Sciatic nerve (tissue), 2 donors: ENCODE measurements at regions of chr7 and their contacts with region 1.

Region 1: DNA sequence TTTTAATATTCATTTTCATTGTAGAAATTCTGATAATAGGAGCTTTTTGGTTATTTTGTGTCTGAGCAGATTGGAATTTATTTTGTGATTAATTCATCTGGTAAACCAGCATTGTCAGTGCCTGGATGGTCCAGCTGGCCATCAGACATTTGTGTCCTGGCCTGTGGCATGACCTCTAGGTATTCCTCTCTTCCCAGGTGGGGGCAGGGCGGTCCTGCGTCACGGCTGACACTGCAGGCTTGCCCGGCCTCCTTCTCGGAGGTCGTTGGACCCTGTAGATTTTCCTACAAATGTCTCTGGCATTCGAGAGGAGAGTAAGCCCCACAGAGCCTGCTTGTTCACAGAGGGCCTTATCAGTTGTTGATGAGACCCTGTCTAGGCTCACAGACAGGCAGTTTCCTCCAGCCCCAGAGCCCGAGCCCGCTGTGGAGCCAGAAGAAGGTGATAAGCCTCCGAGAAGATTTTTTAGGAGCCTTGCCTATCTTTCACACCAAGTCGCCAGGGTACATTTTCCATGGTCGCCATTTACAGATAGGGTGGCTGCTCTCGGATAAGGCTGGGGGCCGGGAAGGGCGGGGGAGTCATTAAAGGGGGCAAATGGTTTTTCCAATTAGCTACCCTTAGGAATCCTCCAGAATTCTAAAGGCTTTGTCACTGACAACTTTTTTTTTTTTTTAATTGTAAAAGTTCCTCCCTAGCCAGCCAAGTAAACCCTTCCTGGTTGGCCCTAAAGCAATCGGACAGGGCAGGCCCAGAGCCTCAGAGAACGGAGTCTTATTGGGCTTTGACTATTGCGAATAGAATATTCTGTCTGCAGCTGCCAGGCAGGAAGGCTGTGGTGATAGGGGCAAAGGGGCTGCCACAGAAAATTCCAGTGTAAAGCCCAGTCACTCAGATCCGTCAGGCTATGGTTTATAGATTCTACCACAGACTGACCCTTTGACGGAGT is 78.1 kb upstream of the TBX20 start:
- DNase-seq: no peak
- ATAC-seq: no peak

Region 2: DNA sequence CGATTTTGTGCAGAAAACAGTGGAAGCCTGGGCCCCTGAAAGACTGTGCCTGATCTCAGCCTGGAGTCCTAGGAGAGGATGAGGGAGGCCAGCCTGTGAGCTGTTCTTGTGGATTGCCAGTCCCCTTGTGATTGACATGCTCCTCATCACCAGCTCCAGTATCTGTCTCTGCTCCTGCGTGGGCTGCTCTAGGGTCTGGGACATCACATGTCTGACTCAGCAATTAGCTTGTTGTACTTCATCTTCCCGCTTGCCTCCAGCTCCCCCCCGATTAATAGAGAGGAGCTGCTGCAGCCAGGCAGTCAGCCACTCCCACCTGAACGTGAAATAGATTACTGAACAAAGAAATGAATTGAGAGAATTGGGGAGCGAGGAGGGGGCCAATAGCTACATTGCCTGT is 21.5 kb after region 1 on chr7:
- intact Hi-C with region 1: loop called (anchors 1 kb)
- DNase-seq: no peak
- ATAC-seq: no peak

Region 3: DNA sequence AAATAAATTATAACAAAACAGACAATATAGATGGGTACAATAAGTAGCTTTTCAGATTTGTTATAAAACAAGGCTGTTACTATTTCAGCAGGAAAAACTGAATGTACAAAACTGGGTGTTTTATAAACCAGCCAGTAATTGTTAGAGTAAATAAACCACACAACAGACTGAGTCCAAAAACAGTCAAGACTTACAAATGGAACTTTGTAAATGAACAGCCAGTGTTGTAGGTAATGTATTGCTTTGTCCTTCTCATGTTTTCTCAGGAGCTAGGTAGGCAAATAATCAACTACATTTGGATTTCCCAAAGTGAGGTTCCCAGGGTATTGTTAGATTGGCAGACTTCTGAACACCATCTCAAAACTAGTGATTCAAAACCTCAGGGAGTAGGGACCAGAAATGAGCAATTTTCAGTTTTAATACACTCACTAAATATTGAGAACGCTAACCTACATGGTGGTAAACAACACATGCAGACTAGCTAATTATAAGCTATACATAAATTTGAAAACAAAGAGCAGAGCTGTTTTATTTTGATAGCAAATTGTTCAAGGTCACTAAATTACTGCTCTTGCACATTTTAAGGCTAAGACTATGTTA is 326.7 kb after region 1 on chr7:
- intact Hi-C with region 1: no loop called
- DNase-seq: no peak
- ATAC-seq: no peak

Region 4: GRCh38 chr7:36312344-36313334 is 980.6 kb after region 1 on chr7:
- intact Hi-C with region 1: no loop called
- DNase-seq: no peak
- ATAC-seq: no peak